CD4-positive, alpha-beta T cell (primary cell): ENCODE measurements at regions of chr11 and their contacts with region 1.

Region 1: GRCh38 chr11:111841370-111842053 is 29.9 kb downstream of the ALG9 start:
- DNase-seq: peak; percentile 72 to 93 (median 82)
- ATAC-seq: peak; percentile 97
- H3K4me3 ChIP-seq: no peak overlapping the region
- H3K4me3 Mint-ChIP-seq: no peak overlapping the region
- H3K27ac ChIP-seq: no peak overlapping the region
- H3K27ac Mint-ChIP-seq: no peak overlapping the region
- H3K4me1 ChIP-seq: no peaks in the 10 kb centered on the region
- H3K4me1 Mint-ChIP-seq: peaks cover 5% of the 10 kb centered on the region
- H3K27me3 ChIP-seq: no peaks in the 10 kb centered on the region
- H3K27me3 Mint-ChIP-seq: no peaks in the 10 kb centered on the region
- CTCF ChIP-seq: peak; percentile 94

Region 2: GRCh38 chr11:111565114-111565720 is 276.3 kb before region 1 on chr11:
- CTCF ChIA-PET with region 1: no interaction called
- POLR2A ChIA-PET with region 1: no interaction called
- intact Hi-C with region 1: loop called (anchors 1 kb)
- DNase-seq: peak; percentile 30 to 78 (median 48)
- ATAC-seq: no peak
- H3K4me3 ChIP-seq: no peak overlapping the region
- H3K4me3 Mint-ChIP-seq: no peak overlapping the region
- H3K27ac ChIP-seq: no peak overlapping the region
- H3K27ac Mint-ChIP-seq: no peak overlapping the region
- H3K4me1 ChIP-seq: no peaks in the 10 kb centered on the region
- H3K4me1 Mint-ChIP-seq: no peaks in the 10 kb centered on the region
- H3K27me3 ChIP-seq: peaks cover 0 to 2% of the 10 kb centered on the region in 2 experiments
- H3K27me3 Mint-ChIP-seq: no peaks in the 10 kb centered on the region
- CTCF ChIP-seq: peak; percentile 96

Region 3: DNA sequence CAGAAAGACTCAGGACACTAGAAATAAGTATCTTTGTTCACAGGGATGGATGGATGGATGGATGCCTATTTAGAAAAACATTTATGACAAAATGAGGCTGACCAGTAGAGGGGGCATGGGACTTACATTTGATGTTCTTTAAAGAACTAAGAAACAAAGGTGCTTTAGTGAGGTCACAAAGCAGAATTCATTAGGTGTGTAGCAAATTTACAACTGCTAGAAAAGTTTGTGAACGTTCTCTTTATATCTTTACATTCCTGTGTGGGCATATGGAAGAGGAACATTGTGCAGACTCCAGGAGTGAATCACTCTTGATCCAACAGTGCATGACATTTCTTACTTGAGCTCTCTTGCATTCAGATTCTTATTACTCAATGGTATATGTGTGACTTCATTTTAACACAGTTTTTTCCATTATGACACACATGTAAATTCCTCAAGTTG is 255.1 kb before region 1 on chr11:
- CTCF ChIA-PET with region 1: interaction called, 3 read pairs
- POLR2A ChIA-PET with region 1: no interaction called
- intact Hi-C with region 1: loop called (anchors 1 kb)
- DNase-seq: peak in 10 of 14 experiments; percentile 11 to 78 (median 38)
- ATAC-seq: peak; percentile 74
- H3K4me3 ChIP-seq: no peak overlapping the region
- H3K4me3 Mint-ChIP-seq: no peak overlapping the region
- H3K27ac ChIP-seq: no peak overlapping the region
- H3K27ac Mint-ChIP-seq: no peak overlapping the region
- H3K4me1 ChIP-seq: no peaks in the 10 kb centered on the region
- H3K4me1 Mint-ChIP-seq: no peaks in the 10 kb centered on the region
- H3K27me3 ChIP-seq: peaks cover 3 to 6% of the 10 kb centered on the region in 2 experiments
- H3K27me3 Mint-ChIP-seq: no peaks in the 10 kb centered on the region
- CTCF ChIP-seq: peak; percentile 72